AG04449 (cell line): ENCODE measurements at regions of chr10 and their contacts with region 1.

Region 1: GRCh38 chr10:29304264-29305030 is 15.6 kb downstream of the LYZL1 start:
- DNase-seq: no peak
- H3K4me3 ChIP-seq: no peak overlapping the region
- CTCF ChIP-seq: peak; percentile 74

Region 2: GRCh38 chr10:28628184-28628893 is 676.1 kb before region 1 on chr10:
- CTCF ChIA-PET with region 1: interaction called, 49 read pairs
- POLR2A ChIA-PET with region 1: no interaction called
- DNase-seq: peak; percentile 19
- H3K4me3 ChIP-seq: no peak overlapping the region
- CTCF ChIP-seq: peak; percentile 91

Region 3: GRCh38 chr10:28910956-28911355 is 393.5 kb before region 1 on chr10:
- CTCF ChIA-PET with region 1: no interaction called
- POLR2A ChIA-PET with region 1: no interaction called
- DNase-seq: peak; percentile 33
- H3K4me3 ChIP-seq: no peak overlapping the region
- CTCF ChIP-seq: no peak

Region 4: GRCh38 chr10:29119374-29119773 is 185.1 kb before region 1 on chr10:
- CTCF ChIA-PET with region 1: interaction called, 12 read pairs
- POLR2A ChIA-PET with region 1: no interaction called
- DNase-seq: no peak
- H3K4me3 ChIP-seq: no peak overlapping the region
- CTCF ChIP-seq: peak; percentile 41

Region 5: GRCh38 chr10:29257106-29257783 is 47.2 kb before region 1 on chr10:
- CTCF ChIA-PET with region 1: interaction called, 11 read pairs
- POLR2A ChIA-PET with region 1: no interaction called
- DNase-seq: peak; percentile 82
- H3K4me3 ChIP-seq: no peak overlapping the region; the same call in 1 of the 2 replicates
- CTCF ChIP-seq: no peak

Region 6: DNA sequence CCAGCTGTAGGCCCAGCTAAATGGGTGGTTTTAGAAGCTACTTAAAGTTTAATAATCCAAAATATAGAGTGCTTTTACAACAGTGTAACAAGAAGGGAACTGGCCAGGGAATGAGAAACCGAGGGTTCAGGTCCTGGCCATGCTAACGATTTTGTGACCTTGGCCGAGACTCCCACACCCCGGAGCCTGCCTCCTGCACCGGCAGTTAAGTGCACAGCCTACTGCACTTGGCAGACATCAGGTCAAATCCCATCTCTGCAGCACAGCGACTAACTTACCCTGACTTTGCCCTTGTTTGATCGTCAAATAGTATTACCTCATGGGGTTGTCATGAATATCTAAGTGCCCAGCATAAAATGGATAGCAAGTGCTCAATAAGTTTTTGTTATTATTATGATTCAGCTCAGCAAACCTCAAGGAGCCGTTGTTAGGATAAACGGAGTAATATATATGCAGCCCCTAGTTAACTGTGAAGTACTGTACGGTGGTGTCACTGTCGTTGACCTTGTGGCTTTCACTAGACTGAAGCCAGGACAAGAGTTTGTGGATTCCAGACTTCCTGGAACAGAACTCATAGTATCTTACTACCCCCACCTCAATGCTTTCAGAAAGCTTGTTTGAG is 19.9 kb after region 1 on chr10:
- CTCF ChIA-PET with region 1: interaction called, 16 read pairs
- POLR2A ChIA-PET with region 1: no interaction called
- DNase-seq: no peak
- H3K4me3 ChIP-seq: no peak overlapping the region
- CTCF ChIP-seq: no peak

Region 7: DNA sequence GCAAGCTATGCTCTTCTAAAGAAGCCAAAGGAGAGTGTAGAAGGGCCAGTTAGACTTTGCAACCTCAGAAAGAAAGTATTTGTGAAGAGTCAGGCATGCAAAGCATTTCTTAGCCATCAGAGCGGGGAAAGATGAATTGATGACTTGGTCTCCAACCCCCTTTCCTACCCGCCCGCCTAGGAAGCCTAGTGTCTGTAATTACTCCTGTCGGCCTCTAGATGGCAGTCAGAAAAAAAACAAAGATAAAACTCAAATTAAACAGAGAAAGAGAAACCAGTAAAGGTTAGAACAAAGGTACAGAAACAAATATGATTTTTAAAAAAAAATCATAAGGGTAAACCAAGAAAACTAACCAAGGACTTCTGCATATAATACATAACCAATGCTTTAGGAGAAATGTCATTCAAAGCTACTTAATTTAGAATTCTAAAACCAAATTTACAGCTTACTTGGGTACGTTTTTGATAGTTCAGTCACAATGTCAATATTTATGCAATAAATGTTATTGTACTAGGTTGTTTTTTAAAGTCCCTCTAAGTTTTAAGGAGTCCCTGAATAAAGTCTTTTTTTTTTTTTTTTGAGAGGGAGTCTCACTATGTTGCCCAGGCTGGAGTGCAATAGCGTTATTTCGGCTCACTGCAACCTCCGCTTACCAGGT is 82.0 kb after region 1 on chr10:
- CTCF ChIA-PET with region 1: no interaction called
- POLR2A ChIA-PET with region 1: no interaction called
- DNase-seq: no peak
- H3K4me3 ChIP-seq: no peak overlapping the region
- CTCF ChIP-seq: peak; percentile 43